ENCODE measurements at regions of chr17 and their contacts with region 1.

Region 1: DNA sequence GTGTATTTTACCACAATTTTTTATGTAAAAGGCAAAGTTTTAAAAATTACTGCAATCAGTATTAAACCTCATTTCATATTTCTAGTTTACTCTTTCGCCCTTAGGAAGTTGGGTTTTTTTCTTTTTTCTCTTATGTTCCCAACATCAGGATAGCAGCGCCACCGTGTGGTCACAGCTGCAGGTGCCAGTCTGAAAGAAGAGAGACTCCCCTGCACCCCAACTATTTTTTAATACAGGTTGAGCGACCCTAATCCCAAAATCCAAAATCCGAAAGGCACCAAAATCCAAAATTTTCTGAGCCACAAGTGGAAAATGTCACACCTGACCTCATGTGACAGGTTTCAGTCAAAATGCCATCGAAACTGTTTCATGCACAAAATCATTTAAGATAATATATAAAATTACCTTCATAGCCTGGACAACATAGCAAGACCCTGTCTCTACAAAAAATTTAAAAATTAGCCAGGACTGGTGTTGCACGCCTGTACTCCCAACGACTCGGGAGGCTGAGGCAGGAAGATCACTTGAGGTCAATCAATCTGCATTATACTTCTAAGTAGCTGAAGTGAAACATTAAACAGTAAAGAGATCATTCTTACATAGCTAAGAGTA is 21.8 kb upstream of the ASGR2 start:
- DNase-seq: peak; percentile 73
- H3K4me3 ChIP-seq: no peak overlapping the region
- H3K27ac ChIP-seq: no peak overlapping the region
- H3K4me1 ChIP-seq: peaks cover 18% of the 10 kb centered on the region
- H3K27me3 ChIP-seq: peaks cover 0 to 1% of the 10 kb centered on the region in 2 experiments
- CTCF ChIP-seq: peak; percentile 79 to 89
- POLR2A ChIP-seq: no peak

Region 2: GRCh38 chr17:7060165-7060891 is 76.0 kb before region 1 on chr17:
- CTCF ChIA-PET with region 1: interaction called, 212 read pairs
- POLR2A ChIA-PET with region 1: interaction called, 9 read pairs
- dilution Hi-C with region 1: no loop called
- intact Hi-C with region 1: loop called (anchors 1 kb)
- DNase-seq: peak; percentile 100
- H3K4me3 ChIP-seq: no peak overlapping the region
- H3K27ac ChIP-seq: peak overlapping the region; percentile 86
- H3K4me1 ChIP-seq: peaks cover 35% of the 10 kb centered on the region
- H3K27me3 ChIP-seq: no peaks in the 10 kb centered on the region
- CTCF ChIP-seq: no peak
- POLR2A ChIP-seq: peak; percentile 78

Region 3: GRCh38 chr17:7496470-7497183 is 360.3 kb after region 1 on chr17:
- CTCF ChIA-PET with region 1: no interaction called
- POLR2A ChIA-PET with region 1: no interaction called
- dilution Hi-C with region 1: no loop called
- intact Hi-C with region 1: no loop called
- DNase-seq: peak; percentile 19
- H3K4me3 ChIP-seq: no peak overlapping the region
- H3K27ac ChIP-seq: peak overlapping the region; percentile 51
- H3K4me1 ChIP-seq: peaks cover 23% of the 10 kb centered on the region
- H3K27me3 ChIP-seq: no peaks in the 10 kb centered on the region
- CTCF ChIP-seq: no peak
- POLR2A ChIP-seq: no peak